ENCODE measurements at regions of chr11 and their contacts with region 1.

Region 1: DNA sequence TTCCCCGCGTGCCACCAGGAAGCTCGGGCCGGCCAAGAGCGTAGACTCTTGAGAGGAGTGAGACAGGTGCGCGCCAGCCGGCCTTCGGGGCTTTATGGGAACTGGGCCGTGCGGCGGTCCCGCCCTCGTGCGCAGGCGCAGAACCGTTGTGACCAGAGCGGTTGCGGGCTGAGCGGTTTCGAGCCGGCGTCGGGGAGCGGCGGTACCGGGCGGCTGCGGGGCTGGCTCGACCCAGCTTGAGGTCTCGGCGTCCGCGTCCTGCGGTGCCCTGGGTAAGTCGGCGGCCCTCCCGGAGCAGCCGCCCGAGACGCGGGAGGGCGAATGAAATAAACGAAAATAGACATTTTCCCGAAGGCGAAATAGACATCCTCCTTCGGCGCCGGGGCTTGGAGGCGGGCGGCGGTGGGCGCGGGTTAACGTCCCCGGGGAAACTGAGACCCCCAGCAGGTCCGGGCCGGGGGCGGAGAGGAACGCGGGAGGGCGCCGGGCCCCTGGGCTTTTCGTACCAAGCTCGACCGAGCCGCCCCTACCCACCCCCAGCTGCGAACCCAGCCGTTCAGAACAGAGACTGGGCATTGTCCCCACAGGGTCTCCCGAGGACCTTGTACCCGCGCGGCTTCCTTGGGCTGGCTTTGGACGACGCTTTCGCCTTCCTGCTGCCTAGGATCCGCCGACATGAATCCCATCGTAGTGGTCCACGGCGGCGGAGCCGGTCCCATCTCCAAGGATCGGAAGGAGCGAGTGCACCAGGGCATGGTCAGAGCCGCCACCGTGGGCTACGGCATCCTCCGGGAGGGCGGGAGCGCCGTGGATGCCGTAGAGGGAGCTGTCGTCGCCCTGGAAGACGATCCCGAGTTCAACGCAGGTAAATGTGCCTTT is at the start of gene ASRGL1:
- DNase-seq: peak; percentile 83
- H3K4me3 Mint-ChIP-seq: peak within 1 kb of the TSS; percentile 86
- H3K27ac Mint-ChIP-seq: peak within 1 kb of the TSS; percentile 15
- H3K4me1 Mint-ChIP-seq: peaks cover 19% of the 10 kb centered on the region
- H3K27me3 Mint-ChIP-seq: peaks cover 64% of the 10 kb centered on the region

Region 2: GRCh38 chr11:62201370-62201769 is 136.2 kb before region 1 on chr11:
- CTCF ChIA-PET with region 1: no interaction called
- DNase-seq: no peak
- H3K4me3 Mint-ChIP-seq: no peak overlapping the region
- H3K27ac Mint-ChIP-seq: no peak overlapping the region
- H3K4me1 Mint-ChIP-seq: no peaks in the 10 kb centered on the region
- H3K27me3 Mint-ChIP-seq: peaks cover 22% of the 10 kb centered on the region

Region 3: GRCh38 chr11:62353844-62354243 is 16.3 kb after region 1 on chr11:
- CTCF ChIA-PET with region 1: interaction called, 10 read pairs
- DNase-seq: no peak
- H3K4me3 Mint-ChIP-seq: no peak overlapping the region
- H3K27ac Mint-ChIP-seq: no peak overlapping the region
- H3K4me1 Mint-ChIP-seq: no peaks in the 10 kb centered on the region
- H3K27me3 Mint-ChIP-seq: no peaks in the 10 kb centered on the region

Region 4: GRCh38 chr11:62370743-62371440 is 33.4 kb after region 1 on chr11:
- CTCF ChIA-PET with region 1: interaction called, 39 read pairs
- DNase-seq: peak; percentile 64
- H3K4me3 Mint-ChIP-seq: no peak overlapping the region
- H3K27ac Mint-ChIP-seq: peak overlapping the region; percentile 83
- H3K4me1 Mint-ChIP-seq: peaks cover 36% of the 10 kb centered on the region
- H3K27me3 Mint-ChIP-seq: no peaks in the 10 kb centered on the region